ENCODE measurements at regions of chr2 and their contacts with region 1.

Region 1: GRCh38 chr2:80073134-80073561 is 231.4 kb downstream of the LRRTM1 start:
- DNase-seq: peak; percentile 55 to 83 (median 60)
- ATAC-seq: peak; percentile 95
- H3K4me3 ChIP-seq: no peak overlapping the region
- H3K27ac ChIP-seq: no peak overlapping the region
- H3K4me1 ChIP-seq: peaks cover 0 to 6% of the 10 kb centered on the region in 2 experiments; a peak in 3 of 5 replicates
- H3K27me3 ChIP-seq: no peaks in the 10 kb centered on the region
- CTCF ChIP-seq: peak; percentile 61 to 77 (median 65)
- EP300 ChIP-seq: no peak
- POLR2A ChIP-seq: no peak
- RAD21 ChIP-seq: peak; percentile 76 to 88

Region 2: DNA sequence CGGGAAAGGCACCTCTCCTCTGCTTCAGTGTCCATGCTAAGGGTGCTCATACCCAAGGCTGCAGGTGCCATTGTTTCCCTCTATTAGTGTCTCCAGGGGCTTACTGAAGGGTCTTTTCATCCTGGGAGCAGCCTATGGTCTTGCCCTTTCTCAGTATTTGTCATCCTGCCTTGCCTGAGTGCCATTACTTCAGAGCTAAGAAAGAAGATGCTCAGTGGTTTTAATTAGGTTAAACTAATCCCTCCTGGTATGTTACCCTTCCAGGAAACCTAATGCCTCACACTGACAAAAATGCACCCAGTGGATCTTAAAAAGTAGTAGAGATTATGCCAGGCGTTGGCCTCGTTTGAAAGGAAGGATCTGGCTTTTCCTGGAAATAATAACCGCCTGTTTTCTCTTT is 80.0 kb after region 1 on chr2:
- CTCF ChIA-PET with region 1: no interaction called
- POLR2A ChIA-PET with region 1: no interaction called
- in situ Hi-C with region 1: no loop called
- intact Hi-C with region 1: loop called (anchors 5 kb)
- DNase-seq: no peak
- ATAC-seq: no peak
- H3K4me3 ChIP-seq: no peak overlapping the region
- H3K27ac ChIP-seq: no peak overlapping the region
- H3K4me1 ChIP-seq: peaks cover 7 to 25% of the 10 kb centered on the region in 2 experiments; a peak in 4 of 5 replicates
- H3K27me3 ChIP-seq: no peaks in the 10 kb centered on the region
- CTCF ChIP-seq: no peak
- EP300 ChIP-seq: no peak
- POLR2A ChIP-seq: no peak
- RAD21 ChIP-seq: no peak

Region 3: GRCh38 chr2:80169811-80170594 is 96.9 kb after region 1 on chr2:
- CTCF ChIA-PET with region 1: no interaction called
- POLR2A ChIA-PET with region 1: no interaction called
- in situ Hi-C with region 1: no loop called
- intact Hi-C with region 1: loop called (anchors 5 kb)
- DNase-seq: peak in 2 of 4 experiments; percentile 55 to 75
- ATAC-seq: peak; percentile 65
- H3K4me3 ChIP-seq: no peak overlapping the region
- H3K27ac ChIP-seq: peak overlapping the region; percentile 39; the same call in 1 of the 3 replicates
- H3K4me1 ChIP-seq: peaks cover 5 to 48% of the 10 kb centered on the region in 2 experiments; a peak in 4 of 5 replicates
- H3K27me3 ChIP-seq: no peaks in the 10 kb centered on the region
- CTCF ChIP-seq: no peak
- EP300 ChIP-seq: peak; percentile 81
- POLR2A ChIP-seq: no peak
- RAD21 ChIP-seq: peak in 1 of 2 experiments; percentile 26; a peak in 2 of 4 replicates

Region 4: GRCh38 chr2:80238692-80239469 is 165.7 kb after region 1 on chr2:
- CTCF ChIA-PET with region 1: no interaction called
- POLR2A ChIA-PET with region 1: interaction called, 3 read pairs
- in situ Hi-C with region 1: no loop called
- intact Hi-C with region 1: loop called (anchors 1 kb)
- DNase-seq: peak; percentile 49 to 62 (median 60)
- ATAC-seq: peak; percentile 79
- H3K4me3 ChIP-seq: no peak overlapping the region
- H3K27ac ChIP-seq: no peak overlapping the region
- H3K4me1 ChIP-seq: no peaks in the 10 kb centered on the region; a peak in 1 of 5 replicates
- H3K27me3 ChIP-seq: no peaks in the 10 kb centered on the region
- CTCF ChIP-seq: peak; percentile 48 to 74 (median 64); a peak in 5 of 6 replicates
- EP300 ChIP-seq: no peak
- POLR2A ChIP-seq: no peak
- RAD21 ChIP-seq: peak; percentile 31 to 66; a peak in 3 of 4 replicates

Region 5: GRCh38 chr2:80293039-80293438 is 219.9 kb after region 1 on chr2:
- CTCF ChIA-PET with region 1: no interaction called
- POLR2A ChIA-PET with region 1: no interaction called
- in situ Hi-C with region 1: no loop called
- intact Hi-C with region 1: loop called (anchors 10 kb)
- DNase-seq: no peak
- ATAC-seq: no peak
- H3K4me3 ChIP-seq: no peak overlapping the region
- H3K27ac ChIP-seq: no peak overlapping the region
- H3K4me1 ChIP-seq: no peaks in the 10 kb centered on the region; a peak in 1 of 5 replicates
- H3K27me3 ChIP-seq: no peaks in the 10 kb centered on the region
- CTCF ChIP-seq: no peak
- EP300 ChIP-seq: no peak
- POLR2A ChIP-seq: no peak
- RAD21 ChIP-seq: no peak

Region 6: DNA sequence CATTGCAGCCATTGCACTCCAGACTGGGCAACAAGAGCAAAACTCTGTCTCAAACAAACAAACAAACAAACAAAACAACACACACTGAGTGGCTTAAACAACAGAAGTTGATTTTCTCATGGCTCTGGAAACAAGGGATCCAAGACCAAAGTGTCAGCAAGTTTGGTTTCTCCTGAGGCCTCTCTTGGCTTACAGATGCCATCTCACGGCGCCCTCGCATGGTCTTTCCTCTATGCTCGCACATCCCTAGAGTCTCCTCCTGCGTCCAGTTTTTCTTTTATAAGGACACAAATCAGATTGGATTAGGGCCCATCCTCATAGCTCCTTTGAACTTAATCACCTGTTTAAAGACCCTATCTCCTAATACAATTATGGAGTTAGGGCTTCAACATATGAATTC is 364.8 kb after region 1 on chr2:
- CTCF ChIA-PET with region 1: no interaction called
- POLR2A ChIA-PET with region 1: no interaction called
- in situ Hi-C with region 1: no loop called
- intact Hi-C with region 1: loop called (anchors 5 kb)
- DNase-seq: peak in 2 of 4 experiments; percentile 8 to 30
- ATAC-seq: peak; percentile 59; the same call in 2 of the 3 replicates
- H3K4me3 ChIP-seq: no peak overlapping the region
- H3K27ac ChIP-seq: no peak overlapping the region
- H3K4me1 ChIP-seq: no peaks in the 10 kb centered on the region
- H3K27me3 ChIP-seq: no peaks in the 10 kb centered on the region; a peak in 1 of 5 replicates
- CTCF ChIP-seq: peak in 2 of 3 experiments; percentile 8 to 30; a peak in 1 of 6 replicates
- EP300 ChIP-seq: no peak
- POLR2A ChIP-seq: no peak
- RAD21 ChIP-seq: peak; percentile 18 to 43; a peak in 2 of 4 replicates

Region 7: GRCh38 chr2:80499095-80499494 is 425.9 kb after region 1 on chr2:
- CTCF ChIA-PET with region 1: interaction called, 3 read pairs
- POLR2A ChIA-PET with region 1: no interaction called
- in situ Hi-C with region 1: no loop called
- intact Hi-C with region 1: loop called (anchors 5 kb)
- DNase-seq: peak in 2 of 4 experiments; percentile 9 to 55
- ATAC-seq: peak; percentile 83
- H3K4me3 ChIP-seq: no peak overlapping the region
- H3K27ac ChIP-seq: no peak overlapping the region
- H3K4me1 ChIP-seq: no peaks in the 10 kb centered on the region
- H3K27me3 ChIP-seq: no peaks in the 10 kb centered on the region
- CTCF ChIP-seq: peak; percentile 45 to 69 (median 56); a peak in 5 of 6 replicates
- EP300 ChIP-seq: no peak
- POLR2A ChIP-seq: no peak
- RAD21 ChIP-seq: peak; percentile 81 to 85

Measured in K562 (cell line).